Tibial artery (tissue), 4 donors: ENCODE measurements at regions of chr20 and their contacts with region 1.

Region 1: GRCh38 chr20:45293041-45294002 is 13.3 kb upstream of the RBPJL start:
- DNase-seq: peak; percentile 83 to 86
- H3K4me3 ChIP-seq: peak overlapping the region; percentile 52
- H3K27ac ChIP-seq: peak overlapping the region; percentile 1 to 14
- H3K4me1 ChIP-seq: peaks cover 0 to 15% (median 11%) of the 10 kb centered on the region in 4 donors
- H3K27me3 ChIP-seq: peaks cover 0 to 37% of the 10 kb centered on the region in 2 donors
- CTCF ChIP-seq: peak; percentile 84 to 97

Region 2: DNA sequence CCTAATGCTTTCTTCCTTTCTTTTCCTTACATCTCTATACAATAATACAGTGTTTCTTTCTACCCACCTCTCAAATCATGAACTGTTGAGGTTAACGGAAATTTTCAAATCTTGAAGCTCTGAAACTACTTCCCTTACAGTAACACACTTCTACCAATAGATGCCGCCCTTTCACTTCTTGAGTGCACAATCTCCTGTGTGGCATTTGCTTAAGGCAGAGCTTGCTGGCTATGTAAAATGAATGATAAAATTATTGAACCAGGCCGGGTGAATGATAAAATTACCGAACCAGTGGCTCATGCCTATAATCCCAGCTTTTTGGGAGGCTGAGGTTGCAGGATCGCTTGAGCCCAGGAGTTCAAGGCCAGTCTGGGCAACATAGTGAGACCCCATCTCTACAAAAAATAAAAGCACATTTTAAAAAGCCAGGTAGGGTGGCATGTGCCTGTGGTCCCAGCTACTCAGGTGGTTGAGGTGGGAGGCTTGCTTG is 249.2 kb before region 1 on chr20:
- intact Hi-C with region 1: loop called (anchors 10 kb)
- DNase-seq: no peak
- H3K4me3 ChIP-seq: no peak overlapping the region
- H3K27ac ChIP-seq: no peak overlapping the region
- H3K4me1 ChIP-seq: no peaks in the 10 kb centered on the region
- H3K27me3 ChIP-seq: no peaks in the 10 kb centered on the region
- CTCF ChIP-seq: peak; percentile 61 to 86

Region 3: DNA sequence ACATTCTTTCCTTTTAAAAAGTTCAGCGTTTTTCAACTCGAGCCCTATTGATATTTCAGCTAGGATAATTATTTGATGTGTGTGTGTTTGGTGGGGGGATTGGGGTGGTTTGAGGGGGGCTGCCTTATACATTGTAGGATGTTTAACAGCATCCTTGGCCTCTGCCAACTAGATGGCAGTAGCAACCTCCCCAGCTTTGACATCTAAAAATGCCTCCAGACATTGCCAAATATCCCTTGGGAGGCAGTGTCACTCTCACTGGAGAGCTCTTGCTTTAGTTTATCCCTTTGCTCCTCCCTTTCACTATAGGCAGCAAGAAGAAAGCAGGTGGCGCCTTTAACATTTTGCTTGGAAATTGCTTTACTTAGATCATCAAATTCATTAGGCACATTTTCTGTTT is 99.4 kb after region 1 on chr20:
- intact Hi-C with region 1: no loop called
- DNase-seq: no peak
- H3K4me3 ChIP-seq: no peak overlapping the region
- H3K27ac ChIP-seq: no peak overlapping the region
- H3K4me1 ChIP-seq: no peaks in the 10 kb centered on the region
- H3K27me3 ChIP-seq: no peaks in the 10 kb centered on the region
- CTCF ChIP-seq: peak in 1 of 2 experiments; percentile 10